ENCODE measurements at regions of chr20 and their contacts with region 1.

Region 1: DNA sequence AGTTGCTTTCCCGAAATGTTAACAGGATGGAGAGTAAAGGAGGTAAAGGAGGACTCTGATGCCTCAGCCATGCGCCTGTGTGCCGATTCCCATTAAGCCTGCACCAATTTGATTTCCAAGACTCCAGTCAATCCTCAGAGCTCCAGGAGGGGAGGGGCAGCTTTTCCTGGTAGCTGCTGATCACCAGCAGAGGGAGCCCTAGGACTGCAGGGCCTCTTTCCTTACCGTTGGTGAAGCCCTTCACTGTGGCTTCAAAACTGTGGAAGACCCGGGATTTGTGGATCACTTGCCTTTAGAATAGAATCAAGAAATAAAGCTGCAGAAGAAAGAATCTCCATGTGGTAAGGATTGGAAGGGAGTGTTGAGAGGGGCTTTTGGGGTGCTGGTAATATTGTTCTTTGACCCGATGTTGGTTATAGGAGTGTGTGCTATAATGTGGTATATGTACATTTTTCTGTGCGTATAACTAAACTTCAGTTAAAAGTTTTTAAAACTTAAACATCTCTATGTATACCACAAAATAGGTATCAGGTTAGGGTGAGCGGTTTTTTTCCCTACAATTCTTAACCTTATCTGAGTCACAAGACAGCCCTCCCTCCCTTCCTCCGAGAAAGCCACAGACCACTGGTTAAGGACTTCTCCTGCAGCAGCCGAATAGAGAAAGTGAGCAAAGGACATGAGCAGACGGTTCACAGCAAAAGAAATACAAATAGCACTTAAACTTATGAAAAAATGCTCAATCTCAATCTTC is 6.9 kb upstream of the OSER1 start:
- DNase-seq: peak in 1 of 2 donors; percentile 45
- H3K4me3 ChIP-seq: no peak overlapping the region
- CTCF ChIP-seq: peak in 1 of 3 donors; percentile 45
- POLR2A ChIP-seq: no peak

Region 2: GRCh38 chr20:44304383-44304782 is 86.9 kb after region 1 on chr20:
- intact Hi-C with region 1: loop called (anchors 2 kb)
- DNase-seq: no peak
- H3K4me3 ChIP-seq: no peak overlapping the region
- CTCF ChIP-seq: no peak
- POLR2A ChIP-seq: no peak

Region 3: GRCh38 chr20:44615169-44615791 is 397.8 kb after region 1 on chr20:
- intact Hi-C with region 1: loop called (anchors 5 kb)
- DNase-seq: no peak
- H3K4me3 ChIP-seq: no peak overlapping the region
- CTCF ChIP-seq: no peak
- POLR2A ChIP-seq: no peak

Region 4: GRCh38 chr20:44837946-44838345 is 620.4 kb after region 1 on chr20:
- intact Hi-C with region 1: no loop called
- DNase-seq: no peak
- H3K4me3 ChIP-seq: no peak overlapping the region
- CTCF ChIP-seq: no peak
- POLR2A ChIP-seq: no peak